ENCODE measurements at regions of chr11 and their contacts with region 1.

Region 1: DNA sequence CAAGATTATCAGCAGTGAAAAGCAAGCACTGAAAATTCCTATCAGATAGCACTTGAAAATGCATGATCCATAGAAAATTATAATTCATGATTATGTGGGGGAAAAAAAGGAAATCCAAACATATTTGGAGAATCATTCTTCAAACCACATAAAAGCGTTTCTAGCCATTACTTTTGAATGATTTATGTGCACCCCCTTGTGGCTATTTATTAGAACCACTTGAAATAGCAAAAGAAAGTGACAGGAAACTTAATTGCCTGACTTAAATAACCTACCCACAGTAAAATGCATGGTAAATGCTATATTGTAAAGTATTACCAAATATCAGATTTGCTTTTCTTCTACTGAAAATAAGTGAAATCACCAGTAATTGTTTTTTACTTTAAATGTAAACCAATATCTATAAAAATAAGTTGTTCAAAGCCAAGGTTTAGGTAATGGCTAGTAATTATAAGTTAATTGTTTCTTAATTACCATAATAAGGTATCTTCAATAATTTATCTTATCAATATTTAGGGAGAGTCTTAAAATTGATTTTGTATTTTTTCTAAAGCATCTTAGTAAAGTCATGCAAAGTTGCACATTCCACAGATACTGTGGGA is 168.5 kb downstream of the ARHGAP42 start:
- DNase-seq: peak in 1 of 42 donors; percentile 34

Region 2: GRCh38 chr11:100581318-100581717 is 274.2 kb before region 1 on chr11:
- intact Hi-C with region 1: loop called (anchors 5 kb)
- DNase-seq: peak in 2 of 42 donors; percentile 3 to 37

Region 3: GRCh38 chr11:100687630-100688395 is 167.8 kb before region 1 on chr11:
- intact Hi-C with region 1: loop called (anchors 10 kb)
- DNase-seq: peak in 37 of 42 donors; percentile 10 to 73 (median 32)